PC-3 (cell line): ENCODE measurements at regions of chr1 and their contacts with region 1.

Region 1: GRCh38 chr1:62082456-62083363 is 111.9 kb upstream of the L1TD1 start:
- DNase-seq: peak; percentile 68
- ATAC-seq: peak; percentile 82
- H3K4me3 ChIP-seq: no peak overlapping the region
- H3K27ac ChIP-seq: no peak overlapping the region
- H3K4me1 ChIP-seq: no peaks in the 10 kb centered on the region
- H3K27me3 ChIP-seq: no peaks in the 10 kb centered on the region
- CTCF ChIP-seq: peak; percentile 94

Region 2: DNA sequence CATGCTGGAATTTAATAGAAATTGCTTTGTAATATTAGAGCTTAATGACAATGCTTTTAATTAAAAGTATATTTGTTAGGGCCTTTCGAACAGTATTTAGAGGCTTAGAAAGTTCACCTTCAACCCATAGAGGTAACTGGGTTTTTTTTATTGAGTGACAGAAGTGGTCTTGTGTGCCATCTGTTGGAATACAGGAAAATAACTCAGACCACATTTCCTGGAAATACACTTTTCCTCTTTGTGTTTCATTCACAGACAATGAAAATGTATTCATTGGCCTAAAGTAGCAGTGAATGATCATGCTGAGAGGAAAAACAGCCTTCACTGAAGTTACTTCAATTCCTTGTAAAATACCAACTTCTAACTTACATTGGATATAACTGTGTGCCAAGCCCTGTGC is 28.4 kb after region 1 on chr1:
- CTCF ChIA-PET with region 1: no interaction called
- POLR2A ChIA-PET with region 1: no interaction called
- intact Hi-C with region 1: loop called (anchors 1 kb)
- DNase-seq: no peak
- ATAC-seq: 0 out of 2 replicates have a peak, but pooled peaks have one; percentile 10
- H3K4me3 ChIP-seq: no peak overlapping the region
- H3K27ac ChIP-seq: no peak overlapping the region
- H3K4me1 ChIP-seq: peaks cover 17% of the 10 kb centered on the region
- H3K27me3 ChIP-seq: no peaks in the 10 kb centered on the region
- CTCF ChIP-seq: peak; percentile 42

Region 3: GRCh38 chr1:62131093-62131725 is 48.5 kb after region 1 on chr1:
- CTCF ChIA-PET with region 1: interaction called, 3 read pairs
- POLR2A ChIA-PET with region 1: no interaction called
- intact Hi-C with region 1: loop called (anchors 1 kb)
- DNase-seq: peak; percentile 77
- ATAC-seq: peak; percentile 99
- H3K4me3 ChIP-seq: no peak overlapping the region
- H3K27ac ChIP-seq: no peak overlapping the region
- H3K4me1 ChIP-seq: no peaks in the 10 kb centered on the region
- H3K27me3 ChIP-seq: no peaks in the 10 kb centered on the region
- CTCF ChIP-seq: peak; percentile 92

Region 4: DNA sequence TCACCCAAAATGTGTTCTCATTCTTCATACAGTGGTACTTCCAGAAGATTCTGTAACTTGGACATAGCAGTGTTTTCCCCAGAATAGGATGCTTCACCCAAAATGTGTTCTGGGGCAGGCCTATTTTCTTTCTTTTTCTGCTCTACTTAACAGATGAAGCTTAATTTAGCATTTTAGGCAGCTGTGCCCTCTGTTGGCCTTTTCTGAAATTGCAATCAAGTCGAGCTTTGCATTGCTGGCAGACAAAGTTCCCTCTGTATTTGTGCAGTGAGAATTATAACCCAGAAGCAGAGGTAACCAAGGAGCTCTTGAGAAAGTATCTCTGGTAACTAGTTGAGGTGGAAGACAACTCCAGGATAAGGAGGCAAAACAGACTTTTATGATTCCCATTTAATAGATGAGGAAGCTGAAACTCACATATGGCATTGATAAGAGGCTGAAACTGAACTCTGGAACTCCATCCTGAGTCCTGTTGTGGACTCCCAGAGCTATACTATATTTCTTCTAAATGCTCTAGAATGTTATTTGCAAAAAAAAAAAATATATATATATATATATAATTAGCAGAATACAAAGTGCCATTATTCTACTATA is 61.6 kb after region 1 on chr1:
- CTCF ChIA-PET with region 1: interaction called, 6 read pairs
- POLR2A ChIA-PET with region 1: no interaction called
- intact Hi-C with region 1: loop called (anchors 2 kb)
- DNase-seq: peak; percentile 79
- ATAC-seq: peak; percentile 51
- H3K4me3 ChIP-seq: no peak overlapping the region
- H3K27ac ChIP-seq: no peak overlapping the region
- H3K4me1 ChIP-seq: no peaks in the 10 kb centered on the region
- H3K27me3 ChIP-seq: no peaks in the 10 kb centered on the region
- CTCF ChIP-seq: peak; percentile 76